Activated B cell treated with CpG ODN at 0.5 μM for 24 hours (primary cell): ENCODE measurements at regions of chr2 and their contacts with region 1.

Region 1: DNA sequence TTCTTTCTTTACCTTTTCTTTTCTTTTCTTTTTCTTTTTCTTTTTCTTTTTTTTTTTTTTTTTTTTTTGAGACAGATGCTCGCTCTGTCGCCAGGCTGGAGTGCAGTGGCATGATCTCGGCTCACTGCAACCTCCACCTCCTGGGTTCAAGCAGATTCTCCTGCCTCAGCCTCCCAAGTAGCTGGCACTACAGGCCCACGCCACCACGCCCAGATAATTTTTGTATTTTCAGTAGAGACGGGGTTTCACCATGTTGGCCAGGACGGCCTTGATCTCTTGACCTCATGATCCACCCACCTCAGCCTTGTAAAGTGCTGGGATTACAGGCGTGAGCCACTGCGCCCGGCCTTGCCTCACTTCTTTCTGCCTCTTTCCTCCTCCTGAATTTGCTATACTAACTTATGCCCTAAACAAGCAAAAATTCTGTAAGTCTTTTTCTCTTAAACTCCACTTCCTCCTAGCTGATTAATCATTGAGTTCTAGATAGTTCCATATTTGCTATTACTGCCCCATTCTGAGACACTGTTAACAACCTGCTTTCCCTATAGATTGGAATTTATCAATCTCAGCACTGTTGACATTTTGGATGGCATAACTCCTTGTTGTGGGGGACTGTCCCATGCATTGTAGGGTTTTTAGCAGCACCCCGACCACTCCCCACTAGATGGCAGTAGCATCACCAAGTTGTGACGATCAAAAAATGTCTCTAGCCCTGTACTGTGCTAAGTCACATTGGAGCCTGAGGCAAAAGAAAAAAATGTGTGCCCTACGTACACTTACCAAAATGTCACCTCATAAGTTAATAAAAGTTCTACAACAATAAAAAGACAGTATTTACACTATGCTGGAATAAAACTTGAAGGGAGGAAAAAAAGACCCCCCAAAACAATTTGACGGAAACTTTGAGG is 16.4 kb upstream of the THADA start:
- DNase-seq: peak; percentile 38
- ATAC-seq: peak; percentile 95
- H3K4me3 Mint-ChIP-seq: no peak overlapping the region
- H3K27ac Mint-ChIP-seq: peak overlapping the region; percentile 32
- H3K4me1 Mint-ChIP-seq: no peaks in the 10 kb centered on the region
- H3K27me3 Mint-ChIP-seq: peaks cover 5% of the 10 kb centered on the region
- CTCF ChIP-seq: peak; percentile 51

Region 2: DNA sequence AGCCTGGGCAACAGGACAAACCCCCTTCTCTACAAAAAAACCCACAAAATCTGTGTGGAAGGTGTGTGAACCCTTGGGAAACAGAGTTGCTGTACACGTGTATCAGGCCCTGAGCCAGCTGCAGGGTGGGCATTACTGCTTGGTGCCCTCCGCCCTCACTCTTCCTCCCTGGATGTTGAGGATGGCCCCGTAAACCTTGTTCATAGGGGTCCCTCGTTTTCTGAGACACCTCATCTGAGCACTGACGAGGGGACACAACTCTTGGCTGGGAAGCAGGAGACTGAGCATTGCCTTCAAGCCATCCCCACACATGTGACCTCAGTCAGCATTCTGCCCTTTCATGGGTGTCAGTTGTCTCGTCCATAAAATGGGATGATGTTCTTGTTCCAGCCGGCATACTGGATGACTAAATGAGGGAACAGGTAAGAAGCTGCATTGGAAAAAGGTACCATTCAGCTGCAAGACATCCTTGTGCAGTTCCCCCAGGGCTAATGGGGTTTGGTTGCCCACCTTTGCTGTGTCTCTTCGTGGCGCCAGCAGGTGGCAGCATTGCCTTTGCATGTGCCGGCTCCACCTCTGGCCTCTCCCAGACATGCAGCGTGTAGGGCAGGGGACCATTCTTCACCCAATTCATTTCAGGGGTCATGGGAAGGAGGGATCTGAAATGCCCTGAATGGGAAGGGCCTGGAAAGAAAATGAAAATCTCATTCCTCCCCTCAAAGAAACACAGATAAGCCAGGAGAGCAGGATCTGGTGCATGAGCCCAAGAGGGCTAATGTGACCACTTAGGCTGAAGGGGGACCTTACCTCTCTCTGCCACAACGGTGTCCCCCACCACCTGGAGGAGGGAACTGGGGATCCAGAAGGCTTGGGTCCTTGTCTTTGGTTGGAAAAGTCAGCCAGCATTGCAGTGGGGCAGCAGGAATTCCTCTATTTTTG is 783.5 kb before region 1 on chr2:
- CTCF ChIA-PET with region 1: interaction called, 5 read pairs
- POLR2A ChIA-PET with region 1: no interaction called
- intact Hi-C with region 1: loop called (anchors 1 kb)
- DNase-seq: peak; percentile 52
- ATAC-seq: peak; percentile 88
- H3K4me3 Mint-ChIP-seq: no peak overlapping the region
- H3K27ac Mint-ChIP-seq: no peak overlapping the region
- H3K4me1 Mint-ChIP-seq: peaks cover 14% of the 10 kb centered on the region
- H3K27me3 Mint-ChIP-seq: no peaks in the 10 kb centered on the region
- CTCF ChIP-seq: peak; percentile 65

Region 3: DNA sequence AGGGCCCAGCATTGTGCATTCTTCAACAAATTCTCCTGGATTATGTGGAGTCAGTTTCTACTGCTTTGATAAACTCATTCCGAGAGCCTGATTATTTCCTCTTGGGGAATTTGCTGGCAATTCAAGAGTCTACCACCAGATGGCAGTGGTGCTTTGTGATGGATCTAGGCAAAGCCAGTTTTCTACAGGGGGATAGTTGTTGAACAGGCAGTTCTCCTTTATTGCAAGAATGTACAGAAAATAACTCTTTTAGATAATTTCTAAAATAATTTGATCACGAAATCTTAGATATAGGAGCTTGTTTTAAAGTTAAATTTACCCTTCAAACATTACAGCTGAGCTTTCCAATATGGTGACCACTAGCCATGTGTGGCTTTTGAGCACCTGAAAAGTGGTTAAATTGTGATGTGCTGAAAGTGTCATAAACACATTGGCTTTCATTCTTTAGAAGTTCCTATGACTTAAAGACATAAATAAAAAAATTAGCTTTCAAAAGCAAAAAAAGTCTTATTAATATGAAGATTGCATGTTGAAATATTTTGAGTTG is 753.2 kb before region 1 on chr2:
- CTCF ChIA-PET with region 1: interaction called, 4 read pairs
- POLR2A ChIA-PET with region 1: no interaction called
- intact Hi-C with region 1: loop called (anchors 1 kb)
- DNase-seq: no peak
- ATAC-seq: no peak
- H3K4me3 Mint-ChIP-seq: no peak overlapping the region
- H3K27ac Mint-ChIP-seq: no peak overlapping the region
- H3K4me1 Mint-ChIP-seq: no peaks in the 10 kb centered on the region
- H3K27me3 Mint-ChIP-seq: no peaks in the 10 kb centered on the region
- CTCF ChIP-seq: peak; percentile 42

Region 4: GRCh38 chr2:42944779-42945415 is 667.3 kb before region 1 on chr2:
- CTCF ChIA-PET with region 1: interaction called, 10 read pairs
- POLR2A ChIA-PET with region 1: no interaction called
- intact Hi-C with region 1: loop called (anchors 1 kb)
- DNase-seq: no peak
- ATAC-seq: no peak
- H3K4me3 Mint-ChIP-seq: no peak overlapping the region
- H3K27ac Mint-ChIP-seq: no peak overlapping the region
- H3K4me1 Mint-ChIP-seq: peaks cover 32% of the 10 kb centered on the region
- H3K27me3 Mint-ChIP-seq: no peaks in the 10 kb centered on the region
- CTCF ChIP-seq: no peak

Region 5: DNA sequence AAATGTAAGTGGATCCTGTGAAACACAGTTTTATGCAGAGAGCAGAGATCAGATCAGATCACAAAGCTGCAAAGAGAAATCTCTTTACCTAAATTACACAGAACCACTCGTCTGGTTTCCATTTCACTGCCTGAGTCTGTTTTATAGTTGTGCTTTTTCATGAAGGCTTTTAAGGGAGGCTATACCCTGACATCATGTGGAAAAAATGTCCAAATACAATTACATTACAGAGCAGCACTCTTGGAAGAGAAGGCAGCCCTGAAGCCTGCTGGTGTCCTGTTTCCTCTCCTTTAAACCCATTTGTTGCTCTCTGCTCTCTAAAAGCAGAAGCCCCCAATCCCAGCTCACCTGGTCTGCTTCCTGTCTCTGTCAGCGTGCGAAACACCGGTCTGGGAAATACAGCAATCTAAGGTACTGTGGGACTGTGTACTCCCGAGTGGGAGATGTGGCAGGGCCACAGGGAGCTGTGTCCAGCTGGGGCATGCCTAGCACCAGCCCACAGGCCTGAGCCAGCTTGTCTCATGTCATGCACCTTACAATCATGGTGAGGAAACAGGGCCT is 361.0 kb before region 1 on chr2:
- CTCF ChIA-PET with region 1: no interaction called
- POLR2A ChIA-PET with region 1: no interaction called
- intact Hi-C with region 1: no loop called
- DNase-seq: no peak
- ATAC-seq: no peak
- H3K4me3 Mint-ChIP-seq: no peak overlapping the region
- H3K27ac Mint-ChIP-seq: no peak overlapping the region
- H3K4me1 Mint-ChIP-seq: no peaks in the 10 kb centered on the region
- H3K27me3 Mint-ChIP-seq: no peaks in the 10 kb centered on the region
- CTCF ChIP-seq: no peak

Region 6: DNA sequence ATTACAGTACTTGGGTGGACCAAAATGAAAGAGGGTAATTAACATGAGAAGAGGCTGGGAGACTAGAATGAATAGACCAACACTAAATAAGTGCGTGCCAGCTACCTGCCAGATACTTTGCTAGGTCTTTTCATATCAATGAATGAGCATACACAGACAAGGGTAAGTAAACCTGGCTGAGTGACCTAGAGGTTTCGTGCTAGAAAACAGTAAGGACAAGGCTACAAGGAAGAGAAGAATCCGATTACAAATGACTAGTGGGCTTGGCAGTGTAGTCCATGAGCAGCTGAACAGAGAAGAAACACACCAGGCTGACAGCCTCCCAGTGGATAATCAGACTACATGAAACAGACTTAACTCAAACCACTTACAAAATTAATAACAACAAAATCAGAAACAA is 81.0 kb before region 1 on chr2:
- CTCF ChIA-PET with region 1: no interaction called
- POLR2A ChIA-PET with region 1: no interaction called
- intact Hi-C with region 1: no loop called
- DNase-seq: no peak
- ATAC-seq: no peak
- H3K4me3 Mint-ChIP-seq: no peak overlapping the region
- H3K27ac Mint-ChIP-seq: no peak overlapping the region
- H3K4me1 Mint-ChIP-seq: peaks cover 3% of the 10 kb centered on the region
- H3K27me3 Mint-ChIP-seq: no peaks in the 10 kb centered on the region
- CTCF ChIP-seq: no peak

Region 7: GRCh38 chr2:43595603-43596412 is 16.4 kb before region 1 on chr2 and contains the start of gene THADA:
- CTCF ChIA-PET with region 1: interaction called, 11 read pairs
- POLR2A ChIA-PET with region 1: interaction called, 9 read pairs
- intact Hi-C with region 1: loop called (anchors 1 kb)
- DNase-seq: peak; percentile 86
- ATAC-seq: peak; percentile 98
- H3K4me3 Mint-ChIP-seq: peak within 1 kb of the TSS; percentile 97
- H3K27ac Mint-ChIP-seq: peak within 1 kb of the TSS; percentile 95
- H3K4me1 Mint-ChIP-seq: peaks cover 27% of the 10 kb centered on the region
- H3K27me3 Mint-ChIP-seq: no peaks in the 10 kb centered on the region
- CTCF ChIP-seq: no peak
- total RNA-seq, gene THADA: 43.2 and 51.4 TPM in 2 replicates

Region 8: GRCh38 chr2:43877782-43878464 is 265.7 kb after region 1 on chr2:
- CTCF ChIA-PET with region 1: no interaction called
- POLR2A ChIA-PET with region 1: no interaction called
- intact Hi-C with region 1: loop called (anchors 5 kb)
- DNase-seq: peak; percentile 32
- ATAC-seq: peak; percentile 73
- H3K4me3 Mint-ChIP-seq: no peak overlapping the region
- H3K27ac Mint-ChIP-seq: no peak overlapping the region
- H3K4me1 Mint-ChIP-seq: peaks cover 6% of the 10 kb centered on the region
- H3K27me3 Mint-ChIP-seq: peaks cover 11% of the 10 kb centered on the region
- CTCF ChIP-seq: peak; percentile 47